ENCODE measurements at regions of chr15 and their contacts with region 1.

Region 1: DNA sequence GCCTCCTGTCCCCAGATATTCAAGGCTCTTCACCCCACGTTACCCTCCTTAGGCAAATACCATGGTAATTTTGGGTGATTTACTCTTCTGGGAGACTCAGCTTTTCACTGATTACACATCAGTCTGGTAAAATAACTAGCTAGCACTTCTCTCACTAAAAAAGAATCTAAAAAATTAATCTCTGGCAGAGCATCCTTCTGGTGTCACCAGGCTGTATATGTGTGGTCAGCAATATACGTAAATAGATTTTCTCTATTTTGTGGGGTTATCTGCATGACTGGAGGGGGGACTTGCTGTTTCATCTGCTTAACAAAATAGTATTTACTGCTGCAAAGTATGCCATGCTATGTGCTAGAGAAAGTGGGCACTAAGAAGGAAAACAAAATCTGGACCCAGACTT is 45.1 kb downstream of the LRRC28 start:
- DNase-seq: no peak
- ATAC-seq: no peak
- H3K4me3 ChIP-seq: no peak overlapping the region
- H3K27ac ChIP-seq: no peak overlapping the region
- H3K4me1 ChIP-seq: peaks cover 2 to 4% of the 10 kb centered on the region in 2 donors
- H3K27me3 ChIP-seq: no peaks in the 10 kb centered on the region
- CTCF ChIP-seq: no peak
- POLR2A ChIP-seq: no peak

Region 2: GRCh38 chr15:99207672-99208071 is 88.7 kb before region 1 on chr15:
- in situ Hi-C with region 1: no loop called
- intact Hi-C with region 1: no loop called
- DNase-seq: no peak
- ATAC-seq: no peak
- H3K4me3 ChIP-seq: no peak overlapping the region
- H3K27ac ChIP-seq: no peak overlapping the region
- H3K4me1 ChIP-seq: peaks cover 2 to 25% of the 10 kb centered on the region in 2 donors
- H3K27me3 ChIP-seq: no peaks in the 10 kb centered on the region
- CTCF ChIP-seq: no peak
- POLR2A ChIP-seq: no peak

Region 3: GRCh38 chr15:99333413-99333812 is 37.0 kb after region 1 on chr15:
- in situ Hi-C with region 1: no loop called
- intact Hi-C with region 1: loop called (anchors 5 kb)
- DNase-seq: no peak
- ATAC-seq: no peak
- H3K4me3 ChIP-seq: no peak overlapping the region
- H3K27ac ChIP-seq: no peak overlapping the region
- H3K4me1 ChIP-seq: peaks cover 0 to 4% of the 10 kb centered on the region in 2 donors
- H3K27me3 ChIP-seq: no peaks in the 10 kb centered on the region
- CTCF ChIP-seq: no peak
- POLR2A ChIP-seq: no peak

Measured in gastrocnemius medialis (tissue), 4 donors.